Activated T-helper 1 cell treated with anti-CD3 and anti-CD28 coated beads, Interleukin-12 subunit alpha, Interleukin-12 subunit beta, Interleukin-2, Interleukin-4 antibody, amounts not matched to agents 30 ng/mL and 10 ng/mL and 1 ng/mL, durations not matched to agents 14 hours and 24 hours and 36 hours (primary cell): ENCODE measurements at regions of chr1 and their contacts with region 1.

Region 1: DNA sequence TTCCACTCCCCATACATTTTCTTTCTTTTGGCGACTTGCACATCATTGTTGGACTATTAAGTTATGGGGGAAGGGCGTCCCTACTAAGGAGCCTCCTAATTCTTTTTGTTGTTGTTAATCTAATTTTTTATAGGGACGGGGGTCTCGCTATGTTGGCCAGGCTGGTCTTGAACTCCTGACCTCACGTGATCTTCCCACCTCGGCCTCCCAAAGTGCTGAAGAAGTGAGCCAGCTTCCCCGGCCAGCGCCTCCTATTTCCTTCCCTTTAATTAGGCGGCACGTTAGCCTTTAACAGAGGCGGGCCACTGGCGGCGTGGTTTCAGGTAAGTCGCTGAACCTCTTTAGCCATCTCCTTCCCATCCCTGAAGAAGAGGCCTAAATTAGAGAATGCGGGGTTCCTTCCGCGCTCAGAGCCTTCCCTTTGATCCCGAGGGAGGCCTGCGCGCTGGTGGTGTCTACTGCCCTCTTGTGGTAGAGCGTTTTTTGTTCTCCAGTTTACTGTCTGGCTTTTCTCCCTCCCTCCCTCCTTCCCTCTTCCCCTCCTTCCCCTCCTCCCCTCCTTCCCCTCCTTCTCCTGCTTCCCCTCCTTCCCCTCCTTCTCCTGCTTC is 38.1 kb downstream of the TNFRSF9 start:
- DNase-seq: peak; percentile 39
- H3K4me3 Mint-ChIP-seq: peak overlapping the region; percentile 48
- H3K27ac Mint-ChIP-seq: no peak overlapping the region
- H3K4me1 Mint-ChIP-seq: peaks cover 7% of the 10 kb centered on the region
- H3K27me3 Mint-ChIP-seq: peaks cover 7% of the 10 kb centered on the region

Region 2: DNA sequence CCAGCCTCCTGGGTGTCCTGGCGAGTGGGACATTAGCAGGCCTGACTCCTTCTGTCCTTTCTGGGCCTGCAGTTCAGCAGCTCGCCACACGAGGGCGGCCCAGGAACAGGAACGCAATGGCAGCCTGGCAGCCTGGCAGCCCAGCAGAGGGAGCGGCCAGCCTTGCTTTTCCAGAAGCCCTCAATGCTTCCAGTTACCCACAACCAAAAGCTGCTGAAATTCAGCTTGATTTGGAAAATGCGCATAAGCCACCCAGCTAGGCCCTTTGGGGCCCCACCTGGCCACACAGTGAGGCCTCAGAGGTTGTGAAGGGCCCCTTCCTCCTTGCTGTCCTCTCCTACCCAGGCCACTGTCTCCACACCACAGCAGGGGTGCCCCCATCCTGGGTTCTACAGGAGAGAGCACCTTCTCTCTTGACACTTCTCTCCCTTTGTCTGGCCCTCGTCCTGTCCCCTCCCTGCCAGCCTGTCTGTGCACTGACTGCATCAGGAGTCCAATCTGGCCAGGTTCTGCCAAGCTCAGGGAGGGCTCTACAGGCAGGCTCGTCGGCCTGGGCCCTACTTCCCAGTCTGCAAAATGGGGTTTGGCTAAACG is 234.9 kb before region 1 on chr1:
- intact Hi-C with region 1: loop called (anchors 1 kb)
- DNase-seq: peak; percentile 64
- H3K4me3 Mint-ChIP-seq: no peak overlapping the region
- H3K27ac Mint-ChIP-seq: no peak overlapping the region
- H3K4me1 Mint-ChIP-seq: no peaks in the 10 kb centered on the region
- H3K27me3 Mint-ChIP-seq: peaks cover 2% of the 10 kb centered on the region

Region 3: DNA sequence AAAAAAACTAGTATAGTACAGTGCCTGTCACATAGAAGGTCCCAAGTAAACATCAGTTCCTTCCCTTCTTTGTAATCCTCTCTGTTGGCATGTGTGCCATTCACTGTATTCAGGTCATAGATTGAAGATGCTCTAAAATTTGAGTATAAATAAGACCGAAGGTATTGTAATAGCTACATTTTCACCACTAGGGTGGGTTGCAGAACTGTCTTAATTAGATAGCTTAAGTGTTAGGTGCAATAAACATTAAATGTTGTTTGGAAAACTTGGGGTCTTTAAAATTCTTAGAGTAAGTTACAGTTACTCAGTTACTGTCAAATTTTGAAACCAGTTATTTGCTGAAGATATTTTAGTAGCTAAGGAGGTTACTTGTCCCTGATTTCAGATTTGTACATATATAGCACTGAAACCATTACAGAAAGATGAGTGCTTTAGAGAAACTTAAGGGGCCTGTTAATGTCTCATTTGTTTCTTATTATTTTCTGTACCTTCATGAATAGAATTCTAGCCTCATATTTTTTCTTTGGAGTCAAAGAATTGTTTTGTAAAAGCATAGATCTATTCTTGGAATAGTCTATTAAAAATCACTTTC is 94.2 kb before region 1 on chr1:
- intact Hi-C with region 1: loop called (anchors 1 kb)
- DNase-seq: no peak
- H3K4me3 Mint-ChIP-seq: no peak overlapping the region
- H3K27ac Mint-ChIP-seq: no peak overlapping the region
- H3K4me1 Mint-ChIP-seq: no peaks in the 10 kb centered on the region
- H3K27me3 Mint-ChIP-seq: no peaks in the 10 kb centered on the region

Region 4: DNA sequence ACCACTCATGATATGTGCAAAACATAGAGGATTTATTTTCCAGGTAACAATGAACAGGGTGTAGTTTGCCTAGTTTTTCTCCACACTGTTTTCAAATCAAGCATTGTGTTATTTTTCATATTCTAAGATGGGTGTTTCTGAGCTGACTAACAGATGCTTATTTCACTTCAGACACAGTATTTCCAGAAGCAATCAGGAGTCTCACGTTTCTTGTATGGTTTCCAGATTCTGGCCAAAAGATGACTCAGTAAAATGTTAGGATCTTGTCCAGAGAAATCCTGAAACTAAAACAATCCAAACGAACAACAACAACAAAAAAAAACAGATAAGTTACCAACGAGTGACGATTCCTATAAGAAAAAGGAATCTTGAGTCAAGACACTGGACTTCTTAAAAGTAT is 55.0 kb before region 1 on chr1:
- intact Hi-C with region 1: no loop called
- DNase-seq: no peak
- H3K4me3 Mint-ChIP-seq: no peak overlapping the region
- H3K27ac Mint-ChIP-seq: no peak overlapping the region
- H3K4me1 Mint-ChIP-seq: no peaks in the 10 kb centered on the region
- H3K27me3 Mint-ChIP-seq: peaks cover 1% of the 10 kb centered on the region

Region 5: DNA sequence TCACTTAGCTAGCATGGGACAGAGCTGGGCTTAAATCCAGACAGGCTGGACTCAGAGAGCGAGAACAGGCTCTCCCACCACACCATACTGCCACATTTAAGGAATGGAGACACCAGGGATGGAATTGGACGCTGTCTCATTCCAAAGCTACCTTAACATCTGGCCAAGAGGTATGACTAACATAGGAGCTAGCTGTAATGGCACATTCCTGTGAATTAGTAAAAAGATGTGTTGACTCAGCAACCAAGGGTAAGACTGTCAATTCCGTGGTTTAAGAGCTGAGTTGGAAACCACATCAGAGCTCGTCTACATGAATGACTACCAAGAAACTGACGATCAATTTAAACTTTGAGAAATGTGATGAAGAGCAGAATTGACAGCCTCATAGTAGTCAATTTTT is 46.4 kb after region 1 on chr1:
- intact Hi-C with region 1: loop called (anchors 5 kb)
- DNase-seq: peak; percentile 38
- H3K4me3 Mint-ChIP-seq: peak overlapping the region; percentile 48
- H3K27ac Mint-ChIP-seq: peak overlapping the region; percentile 81
- H3K4me1 Mint-ChIP-seq: peaks cover 42% of the 10 kb centered on the region
- H3K27me3 Mint-ChIP-seq: peaks cover 2% of the 10 kb centered on the region